ENCODE measurements at regions of chr2 and their contacts with region 1.

Region 1: DNA sequence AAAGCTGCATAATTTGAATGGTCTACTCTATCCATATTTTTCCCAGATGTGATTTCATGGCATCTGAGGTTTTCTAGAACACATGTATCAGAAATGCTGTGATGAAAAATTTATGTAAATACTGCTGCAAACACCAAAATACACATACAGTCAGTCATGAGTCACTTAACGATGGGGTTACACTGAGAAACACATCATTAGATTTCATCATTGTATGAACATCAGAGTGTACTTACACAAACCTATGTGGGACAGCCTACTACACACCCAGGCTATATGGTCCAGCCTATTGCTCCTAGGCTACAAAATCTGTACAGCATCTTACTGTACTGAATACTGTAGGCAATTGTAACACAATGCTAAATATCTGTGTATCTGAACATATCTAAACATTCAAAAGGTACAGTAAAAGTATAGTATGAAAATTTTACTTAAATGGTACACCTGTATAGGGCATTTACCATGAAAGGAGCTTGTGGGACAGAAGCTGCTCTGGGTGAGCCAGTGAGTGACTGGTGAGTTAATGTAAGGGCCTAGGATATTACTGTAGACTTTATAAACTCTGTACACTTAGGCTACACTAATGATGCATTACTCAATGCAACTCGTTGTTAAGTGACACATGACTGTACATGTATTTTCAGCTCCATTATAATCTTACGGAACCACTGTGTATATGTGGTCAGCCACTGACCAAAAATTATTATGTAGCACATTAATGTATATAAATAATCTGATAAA is 33.5 kb downstream of the PNO1 start:
- DNase-seq: no peak
- ATAC-seq: peak; percentile 89
- H3K4me3 Mint-ChIP-seq: no peak overlapping the region
- H3K27ac Mint-ChIP-seq: peak overlapping the region; percentile 76
- H3K4me1 Mint-ChIP-seq: peaks cover 61% of the 10 kb centered on the region
- H3K27me3 Mint-ChIP-seq: no peaks in the 10 kb centered on the region

Region 2: GRCh38 chr2:67694445-67694844 is 496.7 kb before region 1 on chr2:
- CTCF ChIA-PET with region 1: no interaction called
- POLR2A ChIA-PET with region 1: no interaction called
- intact Hi-C with region 1: no loop called
- DNase-seq: peak; percentile 7
- ATAC-seq: no peak
- H3K4me3 Mint-ChIP-seq: no peak overlapping the region
- H3K27ac Mint-ChIP-seq: no peak overlapping the region
- H3K4me1 Mint-ChIP-seq: no peaks in the 10 kb centered on the region
- H3K27me3 Mint-ChIP-seq: no peaks in the 10 kb centered on the region

Region 3: DNA sequence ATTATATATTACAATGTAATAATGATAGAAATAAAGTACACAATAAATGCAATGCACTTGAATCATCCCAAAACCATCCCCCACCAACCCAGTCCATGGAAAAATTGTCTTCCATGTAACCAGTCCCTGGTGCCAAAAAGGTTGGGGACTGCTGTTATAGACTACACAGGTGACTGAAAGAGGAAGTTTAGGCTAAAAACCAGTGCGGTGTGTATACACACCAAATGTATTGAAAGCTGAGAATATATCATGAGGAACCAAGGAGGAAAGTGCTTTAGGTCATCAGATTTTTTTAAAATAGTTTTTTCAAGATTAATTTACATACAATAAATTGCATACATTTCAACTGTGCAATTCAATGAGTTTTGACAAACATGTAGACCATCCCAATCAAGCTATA is 107.8 kb before region 1 on chr2:
- CTCF ChIA-PET with region 1: no interaction called
- POLR2A ChIA-PET with region 1: no interaction called
- intact Hi-C with region 1: no loop called
- DNase-seq: no peak
- ATAC-seq: no peak
- H3K4me3 Mint-ChIP-seq: no peak overlapping the region
- H3K27ac Mint-ChIP-seq: no peak overlapping the region
- H3K4me1 Mint-ChIP-seq: no peaks in the 10 kb centered on the region
- H3K27me3 Mint-ChIP-seq: peaks cover 2% of the 10 kb centered on the region

Region 4: DNA sequence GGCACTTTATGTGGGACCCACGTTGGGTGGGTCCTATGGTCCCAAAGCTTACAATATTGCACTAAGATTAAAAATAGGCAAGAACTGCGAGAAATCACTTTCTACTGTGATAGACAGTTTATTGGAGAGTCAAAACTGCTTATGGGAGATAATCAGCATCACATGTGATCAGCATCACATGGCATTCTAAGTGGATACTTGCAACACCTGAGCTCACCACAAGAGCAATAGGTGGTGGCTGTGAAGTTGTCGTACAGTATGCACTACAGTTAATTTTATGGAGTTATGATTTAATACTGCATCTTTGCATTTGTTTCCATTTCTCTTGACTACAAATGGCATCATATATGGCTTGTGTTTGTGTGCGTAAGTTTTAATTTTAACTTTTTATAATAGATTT is 21.9 kb before region 1 on chr2:
- CTCF ChIA-PET with region 1: interaction called, 10 read pairs
- POLR2A ChIA-PET with region 1: no interaction called
- intact Hi-C with region 1: no loop called
- DNase-seq: no peak
- ATAC-seq: peak; percentile 62
- H3K4me3 Mint-ChIP-seq: no peak overlapping the region
- H3K27ac Mint-ChIP-seq: no peak overlapping the region
- H3K4me1 Mint-ChIP-seq: peaks cover 9% of the 10 kb centered on the region
- H3K27me3 Mint-ChIP-seq: no peaks in the 10 kb centered on the region

Region 5: GRCh38 chr2:68316111-68316510 is 125.0 kb after region 1 on chr2:
- CTCF ChIA-PET with region 1: no interaction called
- POLR2A ChIA-PET with region 1: no interaction called
- intact Hi-C with region 1: no loop called
- DNase-seq: no peak
- ATAC-seq: no peak
- H3K4me3 Mint-ChIP-seq: no peak overlapping the region
- H3K27ac Mint-ChIP-seq: no peak overlapping the region
- H3K4me1 Mint-ChIP-seq: peaks cover 8% of the 10 kb centered on the region
- H3K27me3 Mint-ChIP-seq: peaks cover 38% of the 10 kb centered on the region

Measured in activated CD4-positive, alpha-beta T cell treated with anti-CD3 and anti-CD28 coated beads for 36 hours (primary cell).